Activated CD8-positive, alpha-beta T cell treated with anti-CD3 and anti-CD28 coated beads for 36 hours (primary cell): ENCODE measurements at regions of chr1 and their contacts with region 1.

Region 1: DNA sequence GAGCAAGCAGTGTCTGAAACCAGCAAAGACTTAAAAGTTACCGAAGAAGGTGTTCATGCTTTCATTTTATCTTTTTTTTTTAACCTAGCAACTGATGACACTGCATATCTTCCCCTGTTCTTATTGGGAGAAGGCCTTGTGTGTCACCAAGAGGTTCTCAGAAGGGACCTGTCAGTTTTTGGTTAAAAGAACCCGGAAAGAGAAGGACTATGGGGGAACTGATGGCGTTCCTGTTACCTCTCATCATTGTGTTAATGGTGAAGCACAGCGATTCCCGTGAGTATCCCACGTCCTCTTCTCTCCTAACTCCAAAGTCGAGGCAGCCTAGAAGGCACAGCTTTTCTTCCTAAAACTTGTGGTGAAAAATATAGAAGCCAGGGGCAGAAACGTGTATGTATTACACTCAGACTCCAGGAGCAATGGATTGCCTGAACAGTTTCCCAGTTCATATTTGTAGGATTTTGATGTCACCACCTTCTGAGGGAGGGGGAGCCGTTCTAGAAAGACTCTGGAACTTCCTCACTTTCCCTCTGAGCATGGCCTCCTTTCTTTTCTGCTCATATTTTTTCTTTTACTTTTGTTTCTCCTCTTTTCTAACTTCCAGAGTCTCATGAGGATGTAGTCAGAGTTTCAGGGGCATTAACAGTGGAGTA is at the start of gene MR1:
- DNase-seq: peak; percentile 40
- ATAC-seq: peak; percentile 96
- H3K4me3 Mint-ChIP-seq: peak within 1 kb of the TSS; percentile 93
- H3K27ac Mint-ChIP-seq: peak within 1 kb of the TSS; percentile 99
- H3K4me1 Mint-ChIP-seq: peaks cover 53% of the 10 kb centered on the region
- H3K27me3 Mint-ChIP-seq: no peaks in the 10 kb centered on the region
- CTCF ChIP-seq: no peak
- total RNA-seq, gene MR1: 15.7 to 16.7 TPM

Region 2: GRCh38 chr1:180935326-180936109 is 98.4 kb before region 1 on chr1:
- CTCF ChIA-PET with region 1: no interaction called
- POLR2A ChIA-PET with region 1: no interaction called
- intact Hi-C with region 1: no loop called
- DNase-seq: no peak
- ATAC-seq: no peak
- H3K4me3 Mint-ChIP-seq: no peak overlapping the region
- H3K27ac Mint-ChIP-seq: no peak overlapping the region
- H3K4me1 Mint-ChIP-seq: peaks cover 8% of the 10 kb centered on the region
- H3K27me3 Mint-ChIP-seq: peaks cover 3% of the 10 kb centered on the region
- CTCF ChIP-seq: no peak

Region 3: DNA sequence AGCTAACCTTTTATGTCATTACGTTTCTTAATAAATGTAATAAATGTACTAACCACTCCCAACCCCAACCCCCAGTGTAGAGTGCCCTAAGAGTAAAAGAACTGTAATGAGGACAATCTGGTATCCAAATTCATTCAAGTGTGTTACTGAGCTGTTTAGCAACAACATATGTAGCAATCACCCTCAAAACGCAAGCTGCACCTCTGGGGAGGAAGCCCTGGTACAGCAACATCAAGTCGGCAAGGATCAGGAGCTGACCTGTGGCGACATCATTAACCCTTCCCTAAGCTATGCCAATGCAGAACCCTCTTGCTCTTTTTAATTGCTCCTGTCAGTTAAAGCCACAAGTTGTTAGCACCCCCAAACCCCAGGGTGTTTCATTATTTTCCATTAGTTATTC is 58.4 kb before region 1 on chr1:
- CTCF ChIA-PET with region 1: no interaction called
- POLR2A ChIA-PET with region 1: no interaction called
- intact Hi-C with region 1: no loop called
- DNase-seq: no peak
- ATAC-seq: no peak
- H3K4me3 Mint-ChIP-seq: no peak overlapping the region
- H3K27ac Mint-ChIP-seq: no peak overlapping the region
- H3K4me1 Mint-ChIP-seq: peaks cover 30% of the 10 kb centered on the region
- H3K27me3 Mint-ChIP-seq: no peaks in the 10 kb centered on the region
- CTCF ChIP-seq: no peak

Region 4: GRCh38 chr1:181021811-181022434 is 12.0 kb before region 1 on chr1:
- CTCF ChIA-PET with region 1: interaction called, 18 read pairs
- POLR2A ChIA-PET with region 1: interaction called, 27 read pairs
- intact Hi-C with region 1: no loop called
- DNase-seq: peak; percentile 80
- ATAC-seq: peak; percentile 48
- H3K4me3 Mint-ChIP-seq: peak overlapping the region; percentile 97
- H3K27ac Mint-ChIP-seq: peak overlapping the region; percentile 97
- H3K4me1 Mint-ChIP-seq: peaks cover 40% of the 10 kb centered on the region
- H3K27me3 Mint-ChIP-seq: no peaks in the 10 kb centered on the region
- CTCF ChIP-seq: no peak

Region 5: GRCh38 chr1:181077576-181078242 is 43.8 kb after region 1 on chr1:
- CTCF ChIA-PET with region 1: interaction called, 15 read pairs
- POLR2A ChIA-PET with region 1: no interaction called
- intact Hi-C with region 1: no loop called
- DNase-seq: no peak
- ATAC-seq: no peak
- H3K4me3 Mint-ChIP-seq: no peak overlapping the region
- H3K27ac Mint-ChIP-seq: no peak overlapping the region
- H3K4me1 Mint-ChIP-seq: peaks cover 5% of the 10 kb centered on the region
- H3K27me3 Mint-ChIP-seq: peaks cover 11% of the 10 kb centered on the region
- CTCF ChIP-seq: no peak

Region 6: GRCh38 chr1:181134543-181135362 is 100.8 kb after region 1 on chr1:
- CTCF ChIA-PET with region 1: interaction called, 254 read pairs
- POLR2A ChIA-PET with region 1: no interaction called
- intact Hi-C with region 1: no loop called
- DNase-seq: peak; percentile 83
- ATAC-seq: peak; percentile 82
- H3K4me3 Mint-ChIP-seq: peak overlapping the region; percentile 63
- H3K27ac Mint-ChIP-seq: peak overlapping the region; percentile 93
- H3K4me1 Mint-ChIP-seq: peaks cover 65% of the 10 kb centered on the region
- H3K27me3 Mint-ChIP-seq: peaks cover 6% of the 10 kb centered on the region
- CTCF ChIP-seq: no peak